ENCODE measurements at regions of chr1 and their contacts with region 1.

Region 1: GRCh38 chr1:209692745-209693504 is 11.7 kb upstream of the HSD11B1 start:
- DNase-seq: peak; percentile 74
- ATAC-seq: peak; percentile 70

Region 2: GRCh38 chr1:209576798-209577197 is 116.1 kb before region 1 on chr1:
- intact Hi-C with region 1: loop called (anchors 2 kb)
- DNase-seq: peak; percentile 81
- ATAC-seq: peak; percentile 97

Region 3: GRCh38 chr1:209601809-209602657 is 90.9 kb before region 1 on chr1:
- intact Hi-C with region 1: loop called (anchors 5 kb)
- DNase-seq: no peak
- ATAC-seq: peak; percentile 95

Region 4: DNA sequence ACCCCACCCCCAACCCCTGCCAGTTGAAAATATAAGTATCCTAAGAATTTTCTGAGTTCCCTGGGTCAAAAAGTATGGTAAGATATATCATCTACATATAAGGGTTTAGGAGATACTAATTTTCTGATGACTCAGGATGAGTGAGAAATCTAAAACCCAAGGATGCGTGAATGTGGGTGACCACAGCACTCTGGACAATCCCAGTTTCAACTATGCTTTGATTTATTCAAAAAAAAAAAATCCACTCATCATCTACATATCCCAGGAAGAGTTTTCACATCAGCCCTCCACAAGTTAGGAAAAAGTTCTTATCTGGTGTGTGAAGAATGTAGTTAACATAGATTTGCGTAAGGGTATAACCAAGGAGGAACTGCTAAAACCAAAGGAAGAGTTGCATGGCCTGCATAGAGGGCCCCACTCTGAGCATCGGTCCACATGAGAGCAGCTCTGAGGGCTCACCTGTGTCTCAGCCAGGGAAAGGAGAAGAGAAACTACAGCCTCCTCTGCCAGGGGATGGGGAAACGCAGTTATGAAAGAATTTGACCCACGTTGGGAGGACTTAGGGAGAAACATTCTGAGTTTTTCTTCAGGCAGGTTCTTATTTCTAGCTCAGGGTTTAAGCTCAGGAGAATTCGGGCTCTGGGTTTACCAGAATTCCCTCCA is 59.5 kb before region 1 on chr1:
- intact Hi-C with region 1: loop called (anchors 5 kb)
- DNase-seq: no peak
- ATAC-seq: no peak

Region 5: GRCh38 chr1:209747580-209748262 is 54.8 kb after region 1 on chr1:
- intact Hi-C with region 1: loop called (anchors 5 kb)
- DNase-seq: peak; percentile 92
- ATAC-seq: peak; percentile 96